Caco-2 (cell line): ENCODE measurements at regions of chr10 and their contacts with region 1.

Region 1: DNA sequence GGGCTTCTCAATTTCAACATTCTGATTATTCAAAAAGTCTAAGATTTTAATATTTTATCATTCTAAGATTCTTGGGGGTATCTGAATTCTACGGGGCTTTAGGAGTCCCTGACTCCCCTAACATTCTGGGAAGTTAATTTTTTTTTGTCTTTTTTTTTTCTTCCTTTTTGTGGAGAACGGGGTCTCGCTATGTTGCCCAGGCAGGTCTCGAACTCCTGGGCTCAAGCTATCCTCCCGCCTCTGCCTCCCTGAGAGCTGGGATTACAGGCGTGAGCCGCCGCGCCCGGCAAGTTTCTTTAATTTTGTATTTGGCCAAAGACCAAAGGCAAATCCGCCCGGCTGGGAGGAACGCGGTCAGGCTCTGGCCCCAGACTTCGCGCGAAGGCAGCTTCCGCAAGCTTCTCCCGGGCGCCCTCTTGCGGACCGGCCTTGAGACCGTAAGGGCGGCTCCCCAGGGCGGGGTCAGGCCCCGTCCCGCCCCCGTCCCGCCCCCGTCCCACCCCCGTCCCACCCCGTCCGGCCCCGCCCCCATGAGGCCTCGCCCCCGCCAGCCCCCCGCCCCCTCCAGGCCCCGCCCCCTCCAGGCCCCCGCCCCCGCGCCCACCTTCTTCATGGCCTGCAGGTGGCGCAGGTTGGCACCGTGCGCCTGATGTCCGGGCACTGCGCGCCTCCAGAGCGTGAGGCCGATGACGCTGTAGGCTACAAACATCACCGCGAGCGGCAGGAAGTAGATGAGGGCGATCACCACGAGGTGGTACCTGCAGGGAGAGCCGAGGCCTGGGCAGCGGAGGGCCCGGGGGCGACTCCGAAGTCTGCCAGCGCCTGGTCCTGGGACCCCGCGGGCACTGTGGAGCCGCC is 8.2 kb downstream of the TACR2 start:
- DNase-seq: peak; percentile 97 to 99
- H3K4me3 ChIP-seq: peak overlapping the region; percentile 52
- H3K4me3 Mint-ChIP-seq: peak overlapping the region; percentile 80
- H3K27ac Mint-ChIP-seq: peak overlapping the region; percentile 86
- H3K4me1 ChIP-seq: peaks cover 13% of the 10 kb centered on the region
- H3K4me1 Mint-ChIP-seq: peaks cover 15% of the 10 kb centered on the region
- H3K27me3 ChIP-seq: no peaks in the 10 kb centered on the region
- H3K27me3 Mint-ChIP-seq: no peaks in the 10 kb centered on the region
- CTCF ChIP-seq: peak; percentile 86 to 92

Region 2: GRCh38 chr10:69222157-69223027 is 186.2 kb before region 1 on chr10:
- CTCF ChIA-PET with region 1: interaction called, 13 read pairs
- POLR2A ChIA-PET with region 1: no interaction called
- intact Hi-C with region 1: no loop called
- DNase-seq: peak; percentile 89 to 96
- H3K4me3 ChIP-seq: no peak overlapping the region
- H3K4me3 Mint-ChIP-seq: peak overlapping the region; percentile 68
- H3K27ac Mint-ChIP-seq: peak overlapping the region; percentile 86
- H3K4me1 ChIP-seq: peaks cover 60% of the 10 kb centered on the region
- H3K4me1 Mint-ChIP-seq: peaks cover 24% of the 10 kb centered on the region
- H3K27me3 ChIP-seq: no peaks in the 10 kb centered on the region
- H3K27me3 Mint-ChIP-seq: no peaks in the 10 kb centered on the region
- CTCF ChIP-seq: peak; percentile 84 to 89

Region 3: GRCh38 chr10:69318106-69318866 is 90.3 kb before region 1 on chr10:
- CTCF ChIA-PET with region 1: interaction called, 14 read pairs
- POLR2A ChIA-PET with region 1: no interaction called
- intact Hi-C with region 1: no loop called
- DNase-seq: peak; percentile 92 to 98
- H3K4me3 ChIP-seq: peak overlapping the region; percentile 64
- H3K4me3 Mint-ChIP-seq: peak overlapping the region; percentile 87
- H3K27ac Mint-ChIP-seq: peak overlapping the region; percentile 53
- H3K4me1 ChIP-seq: peaks cover 48% of the 10 kb centered on the region
- H3K4me1 Mint-ChIP-seq: peaks cover 25% of the 10 kb centered on the region
- H3K27me3 ChIP-seq: no peaks in the 10 kb centered on the region
- H3K27me3 Mint-ChIP-seq: no peaks in the 10 kb centered on the region
- CTCF ChIP-seq: no peak

Region 4: GRCh38 chr10:69397972-69398371 is 10.6 kb before region 1 on chr10:
- CTCF ChIA-PET with region 1: interaction called, 29 read pairs
- POLR2A ChIA-PET with region 1: no interaction called
- intact Hi-C with region 1: no loop called
- DNase-seq: no peak
- H3K4me3 ChIP-seq: no peak overlapping the region
- H3K4me3 Mint-ChIP-seq: no peak overlapping the region
- H3K27ac Mint-ChIP-seq: no peak overlapping the region
- H3K4me1 ChIP-seq: no peaks in the 10 kb centered on the region
- H3K4me1 Mint-ChIP-seq: no peaks in the 10 kb centered on the region
- H3K27me3 ChIP-seq: no peaks in the 10 kb centered on the region
- H3K27me3 Mint-ChIP-seq: no peaks in the 10 kb centered on the region
- CTCF ChIP-seq: no peak

Region 5: GRCh38 chr10:69451209-69451783 is 42.7 kb after region 1 on chr10 and contains the start of gene TSPAN15:
- CTCF ChIA-PET with region 1: interaction called, 38 read pairs
- POLR2A ChIA-PET with region 1: interaction called, 15 read pairs
- intact Hi-C with region 1: no loop called
- DNase-seq: peak; percentile 97 to 99
- H3K4me3 ChIP-seq: peak within 1 kb of the TSS; percentile 74
- H3K4me3 Mint-ChIP-seq: peak within 1 kb of the TSS; percentile 78
- H3K27ac Mint-ChIP-seq: peak within 1 kb of the TSS; percentile 81
- H3K4me1 ChIP-seq: peaks cover 44% of the 10 kb centered on the region
- H3K4me1 Mint-ChIP-seq: peaks cover 45% of the 10 kb centered on the region
- H3K27me3 ChIP-seq: no peaks in the 10 kb centered on the region
- H3K27me3 Mint-ChIP-seq: no peaks in the 10 kb centered on the region
- CTCF ChIP-seq: peak in 1 of 2 experiments; percentile 38
- total RNA-seq, gene TSPAN15: 86.5 and 89.0 TPM in 2 replicates

Region 6: GRCh38 chr10:69588386-69588785 is 179.8 kb after region 1 on chr10:
- CTCF ChIA-PET with region 1: no interaction called
- POLR2A ChIA-PET with region 1: no interaction called
- intact Hi-C with region 1: no loop called
- DNase-seq: no peak
- H3K4me3 ChIP-seq: no peak overlapping the region
- H3K4me3 Mint-ChIP-seq: no peak overlapping the region
- H3K27ac Mint-ChIP-seq: no peak overlapping the region
- H3K4me1 ChIP-seq: no peaks in the 10 kb centered on the region
- H3K4me1 Mint-ChIP-seq: no peaks in the 10 kb centered on the region
- H3K27me3 ChIP-seq: no peaks in the 10 kb centered on the region
- H3K27me3 Mint-ChIP-seq: peaks cover 7% of the 10 kb centered on the region
- CTCF ChIP-seq: peak in 1 of 2 experiments; percentile 36

Region 7: GRCh38 chr10:69629897-69630650 is 221.5 kb after region 1 on chr10 and contains the start of gene FAM241B:
- CTCF ChIA-PET with region 1: interaction called, 39 read pairs
- POLR2A ChIA-PET with region 1: no interaction called
- intact Hi-C with region 1: loop called (anchors 2 kb)
- DNase-seq: peak; percentile 90 to 95
- H3K4me3 ChIP-seq: peak within 1 kb of the TSS; percentile 57
- H3K4me3 Mint-ChIP-seq: peak within 1 kb of the TSS; percentile 68
- H3K27ac Mint-ChIP-seq: no peak within 1 kb of the TSS
- H3K4me1 ChIP-seq: peaks cover 6% of the 10 kb centered on the region
- H3K4me1 Mint-ChIP-seq: no peaks in the 10 kb centered on the region
- H3K27me3 ChIP-seq: no peaks in the 10 kb centered on the region
- H3K27me3 Mint-ChIP-seq: no peaks in the 10 kb centered on the region
- CTCF ChIP-seq: peak; percentile 99 to 100
- total RNA-seq, gene FAM241B: 24.9 and 30.2 TPM in 2 replicates

Region 8: DNA sequence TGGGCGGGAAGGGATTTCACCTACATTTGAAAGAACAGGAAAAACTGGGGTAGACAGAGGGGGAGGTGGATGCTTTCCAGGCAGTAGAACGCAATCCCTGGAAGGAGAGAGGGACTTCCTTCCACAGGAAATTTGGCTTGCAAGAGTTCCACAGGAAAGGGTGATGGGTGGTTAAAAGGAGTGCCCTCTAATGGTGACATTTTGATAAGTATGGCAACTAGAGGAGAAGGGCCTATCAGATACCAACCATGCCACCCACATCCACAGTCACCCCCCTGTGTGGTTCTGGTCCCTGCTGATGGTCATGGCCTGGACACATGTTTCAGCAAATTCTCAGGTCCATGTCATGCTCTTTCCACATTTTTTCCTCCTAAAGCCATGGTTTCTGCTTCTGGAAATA is 366.0 kb after region 1 on chr10:
- CTCF ChIA-PET with region 1: no interaction called
- POLR2A ChIA-PET with region 1: no interaction called
- intact Hi-C with region 1: no loop called
- DNase-seq: no peak
- H3K4me3 ChIP-seq: no peak overlapping the region
- H3K4me3 Mint-ChIP-seq: no peak overlapping the region
- H3K27ac Mint-ChIP-seq: no peak overlapping the region
- H3K4me1 ChIP-seq: no peaks in the 10 kb centered on the region
- H3K4me1 Mint-ChIP-seq: no peaks in the 10 kb centered on the region
- H3K27me3 ChIP-seq: no peaks in the 10 kb centered on the region
- H3K27me3 Mint-ChIP-seq: peaks cover 25% of the 10 kb centered on the region
- CTCF ChIP-seq: no peak